Activated naive CD4-positive, alpha-beta T cell treated with anti-CD3 and anti-CD28 coated beads for 36 hours (primary cell): ENCODE measurements at regions of chr19 and their contacts with region 1.

Region 1: GRCh38 chr19:17932485-17933338 is at the start of gene CCDC124:
- DNase-seq: peak; percentile 95
- H3K4me3 Mint-ChIP-seq: peak within 1 kb of the TSS; percentile 95
- H3K27ac Mint-ChIP-seq: peak within 1 kb of the TSS; percentile 96
- H3K4me1 Mint-ChIP-seq: peaks cover 25% of the 10 kb centered on the region
- H3K27me3 Mint-ChIP-seq: no peaks in the 10 kb centered on the region
- total RNA-seq, gene CCDC124: 107 to 118 TPM

Region 2: GRCh38 chr19:17703824-17704463 is 228.8 kb before region 1 on chr19:
- CTCF ChIA-PET with region 1: interaction called, 4 read pairs
- intact Hi-C with region 1: loop called (anchors 1 kb)
- DNase-seq: peak; percentile 82
- H3K4me3 Mint-ChIP-seq: no peak overlapping the region
- H3K27ac Mint-ChIP-seq: no peak overlapping the region
- H3K4me1 Mint-ChIP-seq: no peaks in the 10 kb centered on the region
- H3K27me3 Mint-ChIP-seq: peaks cover 2% of the 10 kb centered on the region

Region 3: DNA sequence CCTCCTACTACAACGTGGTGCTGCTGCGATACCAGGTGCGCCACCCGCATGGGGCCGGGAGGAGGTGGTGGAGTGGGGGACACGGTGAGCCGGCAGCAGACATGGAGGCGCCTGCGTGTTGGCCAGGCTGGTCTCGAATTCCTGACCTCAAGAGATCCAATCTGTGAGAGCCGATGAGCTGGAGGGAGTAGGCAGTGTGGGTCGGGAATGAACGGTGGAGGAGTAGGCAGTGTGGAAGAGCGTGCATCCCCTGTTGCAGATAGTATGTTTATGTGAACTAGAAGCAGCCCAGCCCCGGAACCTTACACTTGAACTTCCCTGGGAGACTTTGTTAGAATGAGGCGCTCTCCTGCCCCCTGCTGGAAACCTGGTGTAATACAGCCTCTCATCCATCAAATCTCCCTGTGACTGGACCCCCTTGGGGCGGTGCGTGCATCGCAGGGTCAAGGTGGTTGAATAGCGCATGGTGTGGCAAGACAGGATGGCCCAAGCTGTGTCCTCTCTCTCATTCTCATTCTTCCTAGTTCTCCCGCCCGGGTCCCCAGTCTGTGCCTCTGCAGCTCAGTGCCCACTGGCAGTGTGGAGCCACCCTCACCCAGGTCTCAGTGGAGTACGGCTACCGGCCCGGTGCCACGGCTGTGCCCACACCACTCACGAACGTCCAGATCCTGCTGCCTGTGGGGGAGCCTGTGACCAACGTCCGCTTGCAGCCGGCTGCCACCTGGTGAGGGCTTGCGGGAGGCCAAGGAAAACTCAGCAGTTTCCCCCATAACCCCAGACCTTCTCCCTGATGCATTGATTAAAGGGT is 148.3 kb before region 1 on chr19:
- CTCF ChIA-PET with region 1: no interaction called
- intact Hi-C with region 1: loop called (anchors 2 kb)
- DNase-seq: peak; percentile 88
- H3K4me3 Mint-ChIP-seq: no peak overlapping the region
- H3K27ac Mint-ChIP-seq: no peak overlapping the region
- H3K4me1 Mint-ChIP-seq: peaks cover 12% of the 10 kb centered on the region
- H3K27me3 Mint-ChIP-seq: no peaks in the 10 kb centered on the region

Region 4: GRCh38 chr19:17871878-17872250 is 60.8 kb before region 1 on chr19 and contains the start of gene SLC5A5:
- CTCF ChIA-PET with region 1: interaction called, 25 read pairs
- intact Hi-C with region 1: loop called (anchors 1 kb)
- DNase-seq: peak; percentile 49
- H3K4me3 Mint-ChIP-seq: peak within 1 kb of the TSS; percentile 81
- H3K27ac Mint-ChIP-seq: peak within 1 kb of the TSS; percentile 46
- H3K4me1 Mint-ChIP-seq: peaks cover 15% of the 10 kb centered on the region
- H3K27me3 Mint-ChIP-seq: no peaks in the 10 kb centered on the region
- total RNA-seq, gene SLC5A5: 1.1 to 1.2 TPM